Activated CD4-positive, alpha-beta memory T cell treated with anti-CD3 and anti-CD28 coated beads for 36 hours (primary cell): ENCODE measurements at regions of chr3 and their contacts with region 1.

Region 1: GRCh38 chr3:69200384-69201068 is 78.1 kb upstream of the LMOD3 start:
- DNase-seq: peak; percentile 82
- H3K4me3 Mint-ChIP-seq: peak overlapping the region; percentile 92
- H3K27ac Mint-ChIP-seq: peak overlapping the region; percentile 98
- H3K4me1 Mint-ChIP-seq: peaks cover 74% of the 10 kb centered on the region
- H3K27me3 Mint-ChIP-seq: no peaks in the 10 kb centered on the region

Region 2: DNA sequence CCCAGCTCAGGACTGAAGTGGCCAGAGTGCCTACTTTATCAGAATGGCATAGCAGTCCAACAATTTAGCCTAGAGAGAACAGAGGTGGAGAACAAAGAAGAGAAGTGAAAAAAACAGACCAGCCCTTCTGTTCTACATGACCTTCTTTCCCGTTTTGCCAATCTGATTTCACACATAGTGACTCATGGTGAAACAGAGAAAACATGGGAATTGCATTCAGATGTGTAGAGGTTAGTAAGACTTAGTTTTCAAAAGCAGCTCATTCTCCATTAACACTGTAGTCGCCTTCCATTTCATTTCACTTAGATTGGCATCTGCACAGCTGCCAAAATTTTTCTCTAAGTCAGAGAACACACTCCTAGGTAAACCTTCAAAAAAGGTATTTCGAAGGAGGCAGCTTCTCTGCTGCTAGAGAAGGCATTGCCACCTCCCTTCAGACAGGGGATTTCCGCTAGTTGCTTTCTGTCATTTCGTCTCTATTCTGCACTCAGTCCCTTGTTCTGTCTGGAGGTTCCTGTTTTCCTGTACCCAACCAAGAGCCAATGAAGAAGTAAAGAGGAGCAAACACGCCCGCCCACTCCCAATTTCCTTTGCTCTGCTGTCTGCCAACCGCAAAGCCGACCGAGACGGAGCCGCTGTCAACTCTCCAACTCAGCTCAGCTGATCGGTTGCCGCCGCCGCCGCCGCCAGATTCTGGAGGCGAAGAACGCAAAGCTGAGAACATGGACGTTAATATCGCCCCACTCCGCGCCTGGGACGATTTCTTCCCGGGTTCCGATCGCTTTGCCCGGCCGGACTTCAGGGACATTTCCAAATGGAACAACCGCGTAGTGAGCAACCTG is 116.0 kb before region 1 on chr3 and contains the start of gene ARL6IP5:
- CTCF ChIA-PET with region 1: no interaction called
- POLR2A ChIA-PET with region 1: interaction called, 9 read pairs
- intact Hi-C with region 1: loop called (anchors 1 kb)
- DNase-seq: peak; percentile 96
- H3K4me3 Mint-ChIP-seq: peak within 1 kb of the TSS; percentile 97
- H3K27ac Mint-ChIP-seq: peak within 1 kb of the TSS; percentile 97
- H3K4me1 Mint-ChIP-seq: peaks cover 57% of the 10 kb centered on the region
- H3K27me3 Mint-ChIP-seq: no peaks in the 10 kb centered on the region
- total RNA-seq, gene ARL6IP5: 93.9 to 94.8 TPM

Region 3: GRCh38 chr3:69212411-69213139 is 12.0 kb after region 1 on chr3:
- CTCF ChIA-PET with region 1: interaction called, 24 read pairs
- POLR2A ChIA-PET with region 1: interaction called, 53 read pairs
- intact Hi-C with region 1: loop called (anchors 1 kb)
- DNase-seq: no peak
- H3K4me3 Mint-ChIP-seq: no peak overlapping the region
- H3K27ac Mint-ChIP-seq: peak overlapping the region; percentile 76
- H3K4me1 Mint-ChIP-seq: peaks cover 52% of the 10 kb centered on the region
- H3K27me3 Mint-ChIP-seq: no peaks in the 10 kb centered on the region

Region 4: DNA sequence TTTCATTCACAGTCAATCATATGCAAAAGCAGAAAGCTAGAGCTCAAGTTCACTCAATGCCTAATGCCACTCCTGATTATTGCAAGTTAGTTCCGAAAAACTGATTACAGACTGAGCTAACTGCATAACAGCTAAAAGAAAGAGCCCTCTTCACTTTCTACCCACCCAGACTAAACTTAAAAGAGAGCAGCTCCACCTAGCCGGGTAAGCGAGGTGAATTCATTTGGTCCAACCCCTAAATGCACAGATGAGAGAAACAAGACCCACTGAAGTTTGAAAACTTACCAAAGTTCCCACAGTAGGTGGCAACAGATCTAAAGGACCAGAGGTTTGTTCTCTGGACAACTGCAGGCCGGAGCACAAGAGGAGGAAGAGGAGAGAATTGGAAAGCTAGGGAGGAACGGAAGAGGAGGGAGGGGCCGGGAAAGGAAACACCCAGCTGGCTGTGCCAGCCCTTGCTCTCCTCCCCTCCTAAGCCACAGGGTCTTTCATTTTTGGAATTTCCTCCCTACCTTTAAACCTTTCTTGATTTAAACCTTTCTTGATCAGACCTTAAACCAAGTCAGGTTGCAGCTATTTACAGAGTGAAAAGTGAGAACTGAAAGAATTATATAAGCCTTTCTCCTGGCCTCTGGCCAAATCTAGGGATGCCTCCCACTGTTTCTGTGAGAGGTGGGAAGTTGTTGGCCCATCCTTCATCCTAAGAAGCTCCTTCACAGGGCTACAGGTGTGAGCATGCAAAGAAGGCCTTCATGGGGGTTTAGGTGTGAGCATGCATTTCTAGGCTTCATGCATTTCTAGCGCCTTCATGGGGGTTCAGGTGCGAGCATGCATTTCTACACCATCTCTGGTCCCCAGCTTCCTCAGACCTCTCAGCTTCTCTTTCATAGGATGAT is 36.5 kb after region 1 on chr3:
- CTCF ChIA-PET with region 1: interaction called, 10 read pairs
- POLR2A ChIA-PET with region 1: interaction called, 5 read pairs
- intact Hi-C with region 1: loop called (anchors 1 kb)
- DNase-seq: no peak
- H3K4me3 Mint-ChIP-seq: peak overlapping the region; percentile 64
- H3K27ac Mint-ChIP-seq: peak overlapping the region; percentile 20
- H3K4me1 Mint-ChIP-seq: peaks cover 17% of the 10 kb centered on the region
- H3K27me3 Mint-ChIP-seq: no peaks in the 10 kb centered on the region

Region 5: DNA sequence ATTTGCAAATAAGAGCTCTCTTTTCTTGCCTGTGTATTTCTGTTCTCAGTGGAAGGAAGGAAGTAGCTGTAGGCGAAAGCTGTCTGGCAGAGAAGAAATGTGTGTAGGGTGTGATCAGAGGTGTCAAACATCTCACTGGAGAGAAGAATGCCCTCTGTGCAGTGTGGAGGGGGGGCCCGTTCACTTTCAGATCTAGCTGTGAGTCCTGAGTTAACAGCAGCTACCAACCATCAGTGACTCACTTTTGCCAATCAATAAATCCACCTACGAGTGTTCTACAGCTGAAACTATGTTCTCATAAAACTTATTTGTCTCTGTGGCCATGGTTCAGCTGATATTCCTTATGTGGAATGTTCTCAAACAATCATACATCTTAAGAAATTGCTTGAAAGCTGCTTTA is 81.7 kb after region 1 on chr3:
- CTCF ChIA-PET with region 1: interaction called, 4 read pairs
- POLR2A ChIA-PET with region 1: interaction called, 22 read pairs
- intact Hi-C with region 1: loop called (anchors 1 kb)
- DNase-seq: peak; percentile 84
- H3K4me3 Mint-ChIP-seq: no peak overlapping the region
- H3K27ac Mint-ChIP-seq: peak overlapping the region; percentile 38
- H3K4me1 Mint-ChIP-seq: peaks cover 19% of the 10 kb centered on the region
- H3K27me3 Mint-ChIP-seq: no peaks in the 10 kb centered on the region

Region 6: DNA sequence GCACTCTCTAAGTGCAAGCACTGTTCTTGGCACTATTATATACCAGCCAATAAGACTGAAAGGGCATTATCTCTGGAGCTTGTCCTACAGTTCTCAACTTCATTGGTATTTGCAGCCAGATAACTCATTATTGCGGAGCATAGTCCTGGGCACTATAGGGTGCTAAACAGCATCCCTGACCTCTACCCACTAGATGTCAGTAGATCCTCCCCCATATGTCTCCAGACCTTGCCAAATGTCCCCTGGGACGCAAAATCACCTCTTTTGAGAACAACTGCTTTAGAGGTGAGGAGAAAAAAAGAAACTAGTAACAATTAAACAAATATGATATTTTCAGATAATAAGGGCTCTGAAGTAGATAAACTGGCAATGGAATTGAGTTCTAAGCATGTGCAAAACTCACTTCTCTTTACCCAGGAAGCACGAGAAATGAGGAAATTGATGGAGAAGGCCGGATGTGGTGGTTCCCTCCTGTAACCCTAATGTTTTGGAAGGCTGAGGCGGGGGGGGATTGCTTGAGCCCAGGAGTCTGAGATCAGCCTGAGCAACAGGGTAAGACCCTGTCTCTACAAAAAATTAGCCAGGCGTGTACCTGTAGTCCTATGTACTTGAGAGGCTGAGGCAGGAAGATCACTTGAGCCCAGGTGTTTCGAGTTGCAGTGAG is 124.0 kb after region 1 on chr3:
- CTCF ChIA-PET with region 1: interaction called, 5 read pairs
- POLR2A ChIA-PET with region 1: interaction called, 7 read pairs
- intact Hi-C with region 1: loop called (anchors 1 kb)
- DNase-seq: no peak
- H3K4me3 Mint-ChIP-seq: no peak overlapping the region
- H3K27ac Mint-ChIP-seq: no peak overlapping the region
- H3K4me1 Mint-ChIP-seq: peaks cover 47% of the 10 kb centered on the region
- H3K27me3 Mint-ChIP-seq: no peaks in the 10 kb centered on the region

Region 7: DNA sequence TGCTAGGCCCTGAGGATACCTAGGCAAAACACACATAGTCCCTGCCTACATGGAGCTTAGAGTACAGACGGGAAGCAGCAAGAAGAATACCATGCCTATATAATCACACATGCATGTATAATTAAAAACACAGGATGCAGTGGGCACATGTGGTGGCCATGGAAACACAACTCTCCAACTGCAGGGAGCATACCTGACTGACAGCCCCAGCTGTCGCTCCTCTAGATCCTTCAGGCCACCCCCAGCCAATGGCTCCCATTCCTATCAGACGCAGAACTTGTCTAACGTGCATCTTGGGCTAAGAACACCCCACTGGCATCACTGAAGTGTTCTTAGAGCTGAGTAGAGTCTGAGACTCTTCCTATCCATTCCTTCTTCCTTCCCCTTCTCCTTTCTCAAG is 310.8 kb after region 1 on chr3:
- CTCF ChIA-PET with region 1: no interaction called
- POLR2A ChIA-PET with region 1: no interaction called
- intact Hi-C with region 1: no loop called
- DNase-seq: no peak
- H3K4me3 Mint-ChIP-seq: no peak overlapping the region
- H3K27ac Mint-ChIP-seq: no peak overlapping the region
- H3K4me1 Mint-ChIP-seq: no peaks in the 10 kb centered on the region
- H3K27me3 Mint-ChIP-seq: peaks cover 7% of the 10 kb centered on the region